ENCODE measurements at regions of chr20 and their contacts with region 1.

Region 1: GRCh38 chr20:50790651-50791277 is 4.1 kb upstream of the BCAS4 start:
- DNase-seq: peak; percentile 91
- ATAC-seq: peak; percentile 70
- H3K4me3 Mint-ChIP-seq: no peak overlapping the region
- H3K27ac Mint-ChIP-seq: peak overlapping the region; percentile 83
- H3K4me1 Mint-ChIP-seq: peaks cover 18% of the 10 kb centered on the region
- H3K27me3 Mint-ChIP-seq: no peaks in the 10 kb centered on the region

Region 2: GRCh38 chr20:50680412-50680908 is 110.3 kb before region 1 on chr20:
- CTCF ChIA-PET with region 1: no interaction called
- DNase-seq: no peak
- ATAC-seq: no peak
- H3K4me3 Mint-ChIP-seq: no peak overlapping the region
- H3K27ac Mint-ChIP-seq: no peak overlapping the region
- H3K4me1 Mint-ChIP-seq: no peaks in the 10 kb centered on the region
- H3K27me3 Mint-ChIP-seq: peaks cover 5% of the 10 kb centered on the region

Region 3: DNA sequence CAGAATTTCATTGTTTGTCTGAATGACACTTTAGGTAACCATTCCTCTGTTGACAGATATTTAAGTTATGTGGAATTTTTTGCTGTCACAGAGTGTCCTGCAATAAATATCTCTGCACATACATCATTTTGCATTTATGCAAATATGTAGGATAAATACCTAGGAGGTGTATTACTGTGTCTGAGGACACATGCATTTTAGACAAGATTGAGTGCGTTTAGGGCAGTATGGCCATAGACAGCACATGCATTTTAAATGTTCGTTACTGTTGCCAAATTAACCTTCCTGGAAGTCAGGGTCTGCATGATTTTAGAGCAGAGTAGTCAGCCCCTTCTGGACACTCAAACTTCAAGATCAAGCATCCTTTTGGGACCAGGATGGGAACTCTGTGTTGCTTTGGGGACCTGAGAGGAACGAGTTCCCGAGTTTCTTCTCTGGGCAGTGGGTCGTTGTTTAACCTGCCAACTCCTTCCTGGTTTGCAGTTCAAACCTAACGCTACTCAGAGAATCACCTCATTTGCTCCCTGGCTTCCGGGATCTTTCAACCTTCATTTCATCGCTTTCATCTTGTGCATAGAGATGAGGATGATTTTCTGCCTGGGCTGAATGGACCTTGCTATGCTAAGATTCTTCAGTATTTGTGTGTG is 13.8 kb after region 1 on chr20:
- CTCF ChIA-PET with region 1: interaction called, 31 read pairs
- DNase-seq: peak; percentile 69
- ATAC-seq: peak; percentile 90
- H3K4me3 Mint-ChIP-seq: peak overlapping the region; percentile 65
- H3K27ac Mint-ChIP-seq: peak overlapping the region; percentile 97
- H3K4me1 Mint-ChIP-seq: peaks cover 49% of the 10 kb centered on the region
- H3K27me3 Mint-ChIP-seq: no peaks in the 10 kb centered on the region

Region 4: GRCh38 chr20:50844430-50845100 is 53.8 kb after region 1 on chr20:
- CTCF ChIA-PET with region 1: interaction called, 47 read pairs
- DNase-seq: peak; percentile 95
- ATAC-seq: peak; percentile 99
- H3K4me3 Mint-ChIP-seq: no peak overlapping the region
- H3K27ac Mint-ChIP-seq: peak overlapping the region; percentile 98
- H3K4me1 Mint-ChIP-seq: peaks cover 78% of the 10 kb centered on the region
- H3K27me3 Mint-ChIP-seq: no peaks in the 10 kb centered on the region

Region 5: DNA sequence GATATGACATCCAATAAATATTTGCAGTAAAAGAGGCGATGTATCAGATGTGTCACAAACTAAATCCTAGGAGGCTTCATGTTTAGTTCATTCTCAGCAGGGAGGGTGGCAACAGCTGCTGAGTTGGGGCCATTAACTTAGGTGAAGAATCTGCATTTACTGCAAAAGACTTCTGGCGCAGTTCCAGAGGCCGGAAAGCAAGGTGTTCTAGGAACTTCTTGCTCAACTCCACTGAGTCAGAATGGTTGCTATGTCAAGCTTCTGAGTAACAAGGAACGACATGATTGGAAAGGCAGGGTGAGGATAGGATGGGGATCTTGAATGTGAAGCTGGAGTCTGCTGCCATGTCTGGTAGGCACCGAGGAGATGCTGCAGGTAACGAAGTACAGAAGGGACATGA is 128.8 kb after region 1 on chr20:
- CTCF ChIA-PET with region 1: interaction called, 350 read pairs
- DNase-seq: no peak
- ATAC-seq: no peak
- H3K4me3 Mint-ChIP-seq: no peak overlapping the region
- H3K27ac Mint-ChIP-seq: no peak overlapping the region
- H3K4me1 Mint-ChIP-seq: peaks cover 57% of the 10 kb centered on the region
- H3K27me3 Mint-ChIP-seq: no peaks in the 10 kb centered on the region

Region 6: DNA sequence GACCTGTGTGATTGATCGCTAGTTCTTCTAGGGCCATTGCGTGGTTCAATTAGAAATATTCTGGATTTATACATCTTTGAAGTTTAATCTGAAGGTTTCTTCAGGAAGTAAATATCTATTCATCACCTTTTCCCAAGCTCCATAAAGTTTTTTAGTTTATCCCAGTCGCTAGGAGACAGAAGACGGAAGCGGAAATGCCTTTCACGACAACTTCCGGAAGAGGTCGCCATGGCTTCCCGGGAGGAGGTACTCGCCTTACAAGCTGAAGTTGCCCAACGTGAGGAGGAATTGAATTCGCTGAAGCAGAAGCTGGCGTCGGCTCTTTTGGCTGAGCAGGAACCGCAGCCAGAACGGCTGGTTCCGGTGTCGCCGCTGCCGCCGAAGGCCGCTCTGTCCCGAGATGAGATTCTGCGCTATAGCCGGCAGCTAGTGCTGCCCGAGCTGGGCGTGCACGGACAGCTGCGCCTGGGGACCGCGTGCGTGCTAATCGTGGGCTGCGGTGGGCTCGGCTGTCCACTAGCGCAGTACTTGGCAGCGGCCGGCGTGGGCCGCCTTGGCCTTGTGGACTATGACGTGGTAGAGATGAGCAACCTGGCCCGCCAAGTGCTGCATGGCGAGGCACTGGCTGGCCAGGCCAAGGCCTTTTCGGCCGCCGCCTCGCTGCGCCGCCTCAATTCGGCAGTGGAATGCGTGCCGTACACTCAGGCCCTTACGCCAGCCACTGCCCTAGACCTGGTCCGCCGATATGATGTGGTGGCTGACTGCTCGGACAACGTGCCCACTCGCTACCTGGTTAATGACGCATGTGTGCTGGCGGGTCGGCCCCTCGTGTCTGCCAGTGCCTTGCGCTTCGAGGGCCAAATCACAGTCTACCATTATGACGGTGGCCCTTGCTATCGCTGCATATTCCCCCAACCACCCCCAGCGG is 168.1 kb after region 1 on chr20 and contains the start of gene MOCS3:
- CTCF ChIA-PET with region 1: interaction called, 51 read pairs
- DNase-seq: peak; percentile 91
- ATAC-seq: peak; percentile 79
- H3K4me3 Mint-ChIP-seq: peak within 1 kb of the TSS; percentile 93
- H3K27ac Mint-ChIP-seq: peak within 1 kb of the TSS; percentile 98
- H3K4me1 Mint-ChIP-seq: peaks cover 58% of the 10 kb centered on the region
- H3K27me3 Mint-ChIP-seq: no peaks in the 10 kb centered on the region
- total RNA-seq, gene MOCS3: 4.6 to 6.1 TPM

Region 7: GRCh38 chr20:50992733-50993457 is 202.1 kb after region 1 on chr20:
- CTCF ChIA-PET with region 1: interaction called, 37 read pairs
- DNase-seq: peak; percentile 70
- ATAC-seq: peak; percentile 99
- H3K4me3 Mint-ChIP-seq: no peak overlapping the region
- H3K27ac Mint-ChIP-seq: no peak overlapping the region
- H3K4me1 Mint-ChIP-seq: peaks cover 2% of the 10 kb centered on the region
- H3K27me3 Mint-ChIP-seq: peaks cover 20% of the 10 kb centered on the region